A673 (cell line): ENCODE measurements at regions of chr5 and their contacts with region 1.

Region 1: GRCh38 chr5:74919487-74919886 is 53.3 kb upstream of the FAM169A start:
- DNase-seq: peak; percentile 72
- H3K4me3 ChIP-seq: no peak overlapping the region
- H3K27ac ChIP-seq: no peak overlapping the region
- H3K4me1 ChIP-seq: no peaks in the 10 kb centered on the region
- H3K27me3 ChIP-seq: no peaks in the 10 kb centered on the region
- CTCF ChIP-seq: peak; percentile 72

Region 2: DNA sequence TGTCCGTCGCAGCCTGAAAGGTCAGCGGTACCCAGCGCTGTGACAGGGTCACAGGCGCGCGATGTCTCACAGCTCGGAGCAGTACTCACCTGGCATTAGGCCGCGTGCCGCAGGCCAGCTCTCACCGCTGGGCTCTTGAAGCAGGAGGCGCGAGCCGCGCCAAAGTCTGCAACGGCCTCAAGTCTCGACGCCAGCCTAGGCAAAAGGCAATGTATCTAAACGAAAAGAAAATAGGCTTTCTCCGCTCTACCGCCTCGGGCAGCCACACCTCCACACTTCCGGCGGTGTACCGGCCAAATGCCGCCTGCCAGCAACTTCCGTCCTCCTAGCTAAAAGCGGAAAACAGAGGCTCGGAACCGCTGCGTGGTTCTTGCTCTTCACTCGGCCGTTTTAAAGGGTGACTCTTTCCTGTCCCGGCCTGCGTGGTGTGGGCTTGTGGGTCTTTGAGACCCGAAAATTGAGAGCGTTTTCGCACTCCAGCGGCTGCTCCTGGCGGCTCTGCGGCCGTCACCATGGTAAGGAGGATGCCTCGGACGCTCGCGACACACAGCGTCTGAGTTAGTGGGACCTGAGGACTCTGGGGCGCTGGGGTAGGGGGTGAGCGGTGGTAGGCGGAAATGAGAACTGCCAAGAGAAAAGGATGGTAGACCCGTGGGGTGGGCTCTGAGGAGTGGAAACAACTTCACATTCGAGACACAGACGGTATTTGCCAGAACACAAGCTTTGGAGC is 152.5 kb before region 1 on chr5 and contains the starts of genes GFM2 and NSA2:
- CTCF ChIA-PET with region 1: no interaction called
- POLR2A ChIA-PET with region 1: no interaction called
- intact Hi-C with region 1: loop called (anchors 5 kb)
- DNase-seq: peak; percentile 96
- H3K4me3 ChIP-seq: peak within 1 kb of the TSS; percentile 94
- H3K27ac ChIP-seq: peak within 1 kb of the TSS; percentile 77
- H3K4me1 ChIP-seq: peaks cover 22% of the 10 kb centered on the region
- H3K27me3 ChIP-seq: no peaks in the 10 kb centered on the region
- CTCF ChIP-seq: no peak
- total RNA-seq, gene GFM2: 36.0 and 36.3 TPM in 2 replicates
- total RNA-seq, gene NSA2: 76.8 and 111 TPM in 2 replicates

Region 3: GRCh38 chr5:75707911-75708509 is 788.5 kb after region 1 on chr5:
- CTCF ChIA-PET with region 1: no interaction called
- POLR2A ChIA-PET with region 1: no interaction called
- intact Hi-C with region 1: no loop called
- DNase-seq: no peak
- H3K4me3 ChIP-seq: no peak overlapping the region
- H3K27ac ChIP-seq: no peak overlapping the region
- H3K4me1 ChIP-seq: no peaks in the 10 kb centered on the region
- H3K27me3 ChIP-seq: no peaks in the 10 kb centered on the region
- CTCF ChIP-seq: no peak